ENCODE measurements at regions of chr5 and their contacts with region 1.

Region 1: DNA sequence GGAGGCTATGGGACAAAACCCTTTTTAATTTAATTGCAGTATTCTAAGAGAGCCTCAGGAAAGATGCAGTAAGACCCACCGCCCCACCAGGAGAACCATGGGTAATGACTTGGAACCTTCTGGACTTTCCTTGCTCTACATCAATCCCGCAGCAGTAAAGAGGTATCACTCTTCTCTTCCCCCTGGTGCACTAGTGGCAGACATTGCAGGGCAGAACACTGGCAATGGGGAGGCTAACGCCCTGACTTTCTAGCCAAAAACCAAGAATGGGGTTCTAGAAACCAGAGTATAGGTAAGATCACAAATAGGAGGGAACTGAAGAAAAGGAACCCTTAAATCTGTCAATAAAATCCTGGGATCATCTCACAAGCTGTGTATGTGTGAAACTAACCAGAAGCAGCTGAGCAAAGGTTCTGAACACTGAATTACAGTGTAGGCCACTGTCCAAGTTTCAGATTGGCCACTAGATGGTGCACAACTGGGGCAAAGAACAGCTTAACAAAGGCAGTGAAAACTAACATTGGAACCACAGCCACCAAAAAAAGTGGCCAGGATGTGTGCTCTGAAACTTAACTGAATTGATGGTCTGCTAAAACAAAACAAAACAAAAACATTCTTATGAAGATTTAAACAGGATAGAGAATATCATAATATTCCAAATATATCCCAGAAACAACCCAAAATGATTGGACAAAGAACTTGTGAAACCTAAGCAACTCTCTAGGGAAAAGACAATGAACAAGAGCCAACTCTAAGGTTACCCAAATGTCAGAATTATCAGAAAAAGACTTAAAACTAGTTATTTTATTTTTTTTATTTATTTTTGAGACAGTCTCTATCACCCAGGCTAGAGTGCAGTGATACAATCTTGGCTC is 6.6 kb upstream of the FAM151B start:
- DNase-seq: no peak
- H3K4me3 ChIP-seq: no peak overlapping the region
- CTCF ChIP-seq: peak; percentile 82

Region 2: DNA sequence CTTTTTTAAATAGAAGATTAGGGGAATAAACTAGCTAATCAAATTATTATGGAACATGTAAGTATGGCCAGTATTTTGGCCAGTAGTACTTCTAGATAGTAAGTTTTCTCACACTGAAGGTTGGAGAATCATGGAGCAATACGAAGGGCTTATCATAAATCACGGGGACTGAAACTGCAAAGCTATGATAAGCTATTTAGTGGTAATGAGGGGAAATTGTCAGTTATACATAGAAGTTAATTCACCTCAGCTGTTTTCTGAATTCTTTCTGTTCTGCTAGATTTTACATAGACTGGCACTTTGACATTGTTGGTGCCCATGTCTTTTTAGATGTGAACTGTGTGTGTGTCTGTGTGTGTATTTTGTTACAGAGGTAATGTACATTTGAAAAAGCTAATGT is 27.9 kb before region 1 on chr5:
- CTCF ChIA-PET with region 1: interaction called, 10 read pairs
- POLR2A ChIA-PET with region 1: no interaction called
- DNase-seq: no peak
- H3K4me3 ChIP-seq: no peak overlapping the region
- CTCF ChIP-seq: no peak

Region 3: GRCh38 chr5:80466669-80467485 is 14.4 kb before region 1 on chr5:
- CTCF ChIA-PET with region 1: interaction called, 26 read pairs
- POLR2A ChIA-PET with region 1: no interaction called
- DNase-seq: no peak
- H3K4me3 ChIP-seq: no peak overlapping the region
- CTCF ChIP-seq: no peak

Region 4: DNA sequence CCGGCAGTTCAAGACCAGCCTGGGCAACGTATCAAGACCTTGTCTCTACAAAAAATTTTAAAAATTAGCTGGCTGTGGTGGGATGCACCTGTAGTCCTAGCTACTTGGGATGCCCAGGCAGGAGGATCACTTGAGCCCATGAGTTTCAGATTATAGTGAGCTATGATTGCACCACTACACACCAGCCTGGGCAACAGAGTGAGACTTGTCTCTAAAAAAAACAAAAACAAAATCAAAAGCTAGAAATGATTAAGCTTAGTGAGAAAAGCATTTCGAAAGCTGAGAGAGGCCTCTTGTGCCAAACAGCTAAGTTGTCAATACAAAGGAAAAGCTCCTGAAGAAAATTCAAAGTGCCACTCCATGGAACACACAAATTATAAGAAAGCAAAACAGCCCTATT is 11.5 kb after region 1 on chr5:
- CTCF ChIA-PET with region 1: interaction called, 16 read pairs
- POLR2A ChIA-PET with region 1: no interaction called
- DNase-seq: no peak
- H3K4me3 ChIP-seq: no peak overlapping the region
- CTCF ChIP-seq: no peak

Region 5: GRCh38 chr5:80654391-80655230 is 173.4 kb after region 1 on chr5 and contains the starts of genes DHFR and MSH3:
- CTCF ChIA-PET with region 1: interaction called, 13 read pairs
- POLR2A ChIA-PET with region 1: no interaction called
- DNase-seq: peak; percentile 38
- H3K4me3 ChIP-seq: peak within 1 kb of the TSS; percentile 88
- CTCF ChIP-seq: no peak

Measured in AG04449 (cell line).